ENCODE measurements at regions of chr12 and their contacts with region 1.

Region 1: DNA sequence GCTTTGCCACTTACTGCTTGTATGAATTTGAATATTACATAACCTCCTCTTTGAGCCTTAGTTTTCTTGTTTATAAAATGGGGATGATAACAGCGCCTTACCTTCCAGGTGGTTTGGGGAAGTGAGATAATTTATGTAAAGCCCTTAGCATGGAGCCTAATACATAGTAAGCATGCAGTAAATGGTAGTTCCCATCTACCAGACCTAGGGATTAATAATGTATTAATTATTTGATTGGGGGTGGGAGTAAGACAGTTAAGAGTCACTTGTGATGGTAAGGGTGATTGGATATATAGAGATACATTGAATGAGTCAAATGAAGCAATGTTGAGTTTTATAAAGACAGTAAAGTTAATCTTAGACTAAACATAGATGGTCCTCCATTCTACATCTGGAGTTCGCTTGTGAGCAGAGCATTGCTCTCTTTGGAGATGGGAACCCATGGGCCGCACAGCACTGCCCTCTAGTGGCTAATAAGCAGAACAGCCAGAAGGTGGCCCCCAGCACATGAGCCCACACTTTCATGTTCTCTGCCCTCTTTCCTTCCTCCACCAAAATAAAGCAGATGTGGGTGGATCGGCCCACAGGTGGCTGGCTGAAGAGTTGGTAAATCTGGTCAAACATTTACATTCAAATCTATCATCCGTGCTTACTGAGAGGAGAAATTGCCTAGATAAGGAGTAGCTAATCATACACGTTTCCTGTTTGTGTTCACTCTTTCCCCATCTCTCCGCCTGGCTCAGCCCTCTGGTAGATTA is 26.5 kb upstream of the TAMALIN start:
- H3K4me3 Mint-ChIP-seq: no peak overlapping the region
- H3K27ac Mint-ChIP-seq: no peak overlapping the region
- H3K4me1 Mint-ChIP-seq: peaks cover 41% of the 10 kb centered on the region
- H3K27me3 Mint-ChIP-seq: no peaks in the 10 kb centered on the region

Region 2: DNA sequence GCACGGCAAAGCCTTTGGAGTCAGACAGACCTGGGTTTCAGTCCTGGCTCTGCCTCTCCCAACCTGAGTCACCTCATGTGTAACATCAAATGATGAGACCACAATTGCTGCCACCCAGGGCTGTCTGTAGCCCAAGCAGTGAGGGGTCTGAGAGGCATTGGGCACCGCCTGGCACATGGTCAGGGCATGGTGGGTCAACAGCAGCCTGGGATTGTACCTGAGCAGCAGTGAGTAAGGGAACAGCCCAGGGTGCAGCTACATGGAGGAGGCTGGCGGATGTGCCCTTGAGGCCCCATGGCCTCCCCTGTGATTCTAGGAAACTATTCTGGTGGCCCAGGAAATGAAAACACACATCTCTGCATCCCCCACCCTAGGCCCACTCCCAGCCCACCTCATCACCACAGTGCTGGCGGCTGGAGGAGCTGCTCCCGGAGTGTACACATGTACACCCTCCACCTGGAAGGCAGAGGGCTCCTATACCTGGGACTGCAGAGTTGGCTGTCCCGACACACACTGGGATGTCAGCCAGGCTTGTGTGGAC is 84.7 kb before region 1 on chr12:
- intact Hi-C with region 1: loop called (anchors 1 kb)
- H3K4me3 Mint-ChIP-seq: no peak overlapping the region
- H3K27ac Mint-ChIP-seq: peak overlapping the region; percentile 23
- H3K4me1 Mint-ChIP-seq: peaks cover 39% of the 10 kb centered on the region
- H3K27me3 Mint-ChIP-seq: peaks cover 14% of the 10 kb centered on the region

Region 3: GRCh38 chr12:52358575-52359350 is 378.5 kb after region 1 on chr12:
- intact Hi-C with region 1: no loop called
- H3K4me3 Mint-ChIP-seq: no peak overlapping the region
- H3K27ac Mint-ChIP-seq: no peak overlapping the region
- H3K4me1 Mint-ChIP-seq: no peaks in the 10 kb centered on the region
- H3K27me3 Mint-ChIP-seq: peaks cover 4% of the 10 kb centered on the region